Mammary epithelial cell (primary cell): ENCODE measurements at regions of chr2 and their contacts with region 1.

Region 1: GRCh38 chr2:85999061-85999831 is 106.4 kb downstream of the POLR1A start:
- DNase-seq: no peak
- H3K4me3 ChIP-seq: no peak overlapping the region
- H3K27ac ChIP-seq: no peak overlapping the region
- H3K4me1 ChIP-seq: no peaks in the 10 kb centered on the region
- H3K27me3 ChIP-seq: no peaks in the 10 kb centered on the region
- CTCF ChIP-seq: no peak

Region 2: DNA sequence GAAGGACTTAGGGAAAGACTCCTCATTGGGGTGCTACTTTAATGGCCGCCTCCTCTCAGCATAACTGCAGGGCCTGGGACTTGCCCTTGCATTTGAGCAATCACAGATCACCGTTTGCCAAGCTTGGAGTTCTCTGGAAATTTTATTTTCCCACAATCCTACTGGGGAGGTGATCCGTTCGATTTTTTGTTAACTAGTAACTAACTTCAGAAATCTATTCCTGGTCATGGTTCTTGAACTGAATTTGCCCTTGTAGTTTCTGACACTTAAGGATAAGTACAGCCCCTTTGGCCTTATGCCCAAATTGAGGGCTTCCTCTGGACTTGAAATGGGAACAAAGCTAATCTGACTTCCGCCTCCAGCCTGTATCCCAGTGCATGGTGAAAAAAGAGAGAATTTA is 50.0 kb before region 1 on chr2:
- CTCF ChIA-PET with region 1: no interaction called
- dilution Hi-C with region 1: no loop called
- in situ Hi-C with region 1: no loop called
- intact Hi-C with region 1: no loop called
- DNase-seq: no peak
- H3K4me3 ChIP-seq: no peak overlapping the region
- H3K27ac ChIP-seq: no peak overlapping the region
- H3K4me1 ChIP-seq: no peaks in the 10 kb centered on the region
- H3K27me3 ChIP-seq: no peaks in the 10 kb centered on the region
- CTCF ChIP-seq: no peak

Region 3: DNA sequence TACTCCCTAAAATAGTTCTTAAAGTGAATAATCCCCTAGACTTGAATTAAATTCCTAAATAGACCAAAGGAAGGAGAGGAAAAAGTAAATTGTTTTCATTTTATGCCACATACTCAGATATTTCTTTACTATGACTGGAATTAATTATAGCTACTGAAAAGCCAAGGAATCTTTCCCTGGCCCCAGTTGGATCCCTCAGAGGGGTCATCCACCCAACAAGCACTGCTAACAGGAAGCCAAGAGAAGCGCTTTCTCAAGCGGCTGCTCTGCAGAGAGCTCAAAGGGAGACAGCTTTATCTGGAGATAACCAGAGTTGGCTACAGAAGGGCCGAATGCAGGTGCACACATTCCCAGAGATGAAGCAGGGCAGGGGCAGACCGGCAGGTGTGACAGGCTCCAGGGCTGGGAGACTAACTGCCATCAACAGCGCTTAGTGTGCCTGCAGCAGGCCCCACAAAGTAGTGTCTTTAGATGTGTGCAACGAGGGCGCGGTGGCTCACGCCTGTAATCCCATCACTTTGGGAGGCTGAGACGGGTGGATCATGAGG is 55.4 kb after region 1 on chr2:
- CTCF ChIA-PET with region 1: no interaction called
- dilution Hi-C with region 1: loop called (anchors 5 kb)
- in situ Hi-C with region 1: no loop called
- intact Hi-C with region 1: no loop called
- DNase-seq: no peak
- H3K4me3 ChIP-seq: no peak overlapping the region
- H3K27ac ChIP-seq: no peak overlapping the region
- H3K4me1 ChIP-seq: no peaks in the 10 kb centered on the region
- H3K27me3 ChIP-seq: no peaks in the 10 kb centered on the region
- CTCF ChIP-seq: no peak

Region 4: GRCh38 chr2:86221066-86221684 is 221.9 kb after region 1 on chr2:
- CTCF ChIA-PET with region 1: no interaction called
- dilution Hi-C with region 1: no loop called
- in situ Hi-C with region 1: no loop called
- intact Hi-C with region 1: no loop called
- DNase-seq: peak; percentile 32
- H3K4me3 ChIP-seq: no peak overlapping the region
- H3K27ac ChIP-seq: no peak overlapping the region
- H3K4me1 ChIP-seq: no peaks in the 10 kb centered on the region
- H3K27me3 ChIP-seq: no peaks in the 10 kb centered on the region
- CTCF ChIP-seq: peak; percentile 58 to 81